Adrenal gland (tissue), 19 donors: ENCODE measurements at regions of chr2 and their contacts with region 1.

Region 1: DNA sequence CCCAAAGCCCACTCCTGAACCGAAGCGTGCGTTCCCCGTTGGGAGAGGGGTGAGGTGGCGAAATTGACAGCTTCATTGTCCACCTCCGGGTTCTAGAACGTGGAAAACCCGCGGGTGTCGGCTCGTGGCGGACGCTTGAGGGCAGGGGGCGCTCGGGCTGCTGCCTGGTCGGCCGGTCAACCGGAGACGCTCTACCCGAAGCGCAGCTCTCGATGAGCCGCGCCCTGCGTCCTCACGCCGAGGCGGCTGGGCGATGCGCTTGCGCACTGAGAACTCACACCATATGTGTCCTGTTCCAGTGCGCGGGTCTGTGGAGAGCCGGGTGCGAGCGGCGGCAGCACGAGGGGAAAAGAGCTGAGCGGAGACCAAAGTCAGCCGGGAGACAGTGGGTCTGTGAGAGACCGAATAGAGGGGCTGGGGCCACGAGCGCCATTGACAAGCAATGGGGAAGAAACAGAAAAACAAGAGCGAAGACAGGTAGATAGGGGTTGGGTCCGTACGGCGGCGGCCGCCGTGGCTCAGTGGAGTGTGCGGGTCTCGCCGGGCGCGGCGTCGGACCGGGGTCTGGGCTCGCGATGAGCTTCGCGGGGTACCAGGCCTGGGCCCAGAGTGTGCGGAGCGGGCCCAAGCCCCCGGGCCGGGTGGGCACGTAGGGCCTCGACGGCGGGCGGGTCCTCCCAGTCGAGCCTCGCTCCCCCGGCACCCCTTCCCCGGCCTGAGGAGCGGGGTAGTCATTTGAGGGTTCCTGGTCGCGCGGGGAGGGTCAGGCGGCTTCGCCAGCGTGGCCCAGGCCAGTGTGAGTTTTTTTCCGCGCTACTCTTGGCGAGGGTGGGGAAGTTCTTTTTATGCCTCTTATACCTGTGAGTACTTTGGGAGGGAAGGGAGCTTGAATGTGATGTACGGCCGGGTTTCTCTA is at the start of gene EIF5B:
- DNase-seq: peak; percentile 95 to 98 (median 96)
- H3K4me3 ChIP-seq: peak within 1 kb of the TSS; percentile 62 to 80 (median 75)
- H3K27ac ChIP-seq: peak within 1 kb of the TSS; percentile 81 to 96 (median 92)
- H3K4me1 ChIP-seq: peaks cover 12 to 26% of the 10 kb centered on the region in 2 donors
- H3K27me3 ChIP-seq: no peaks in the 10 kb centered on the region
- CTCF ChIP-seq: peak; percentile 23 to 51 (median 48)
- POLR2A ChIP-seq: peak; percentile 73 to 96
- total RNA-seq, gene EIF5B: 11.1 to 36.5 (median 23.6) TPM

Region 2: GRCh38 chr2:99180755-99181623 is 156.4 kb before region 1 on chr2 and contains the starts of genes MITD1 and MRPL30:
- intact Hi-C with region 1: loop called in 1 of 2 experiments (anchors 10 kb)
- DNase-seq: peak; percentile 90 to 98 (median 95)
- H3K4me3 ChIP-seq: peak within 1 kb of the TSS; percentile 45 to 80 (median 59)
- H3K27ac ChIP-seq: peak within 1 kb of the TSS; percentile 15 to 90 (median 68)
- H3K4me1 ChIP-seq: peaks cover 22 to 44% of the 10 kb centered on the region in 2 donors
- H3K27me3 ChIP-seq: no peaks in the 10 kb centered on the region
- CTCF ChIP-seq: no peak
- POLR2A ChIP-seq: peak; percentile 65 to 84
- total RNA-seq, gene MITD1: 14.4 to 48.1 (median 24.2) TPM
- total RNA-seq, gene MRPL30: 25.4 to 50.8 (median 32.3) TPM

Region 3: DNA sequence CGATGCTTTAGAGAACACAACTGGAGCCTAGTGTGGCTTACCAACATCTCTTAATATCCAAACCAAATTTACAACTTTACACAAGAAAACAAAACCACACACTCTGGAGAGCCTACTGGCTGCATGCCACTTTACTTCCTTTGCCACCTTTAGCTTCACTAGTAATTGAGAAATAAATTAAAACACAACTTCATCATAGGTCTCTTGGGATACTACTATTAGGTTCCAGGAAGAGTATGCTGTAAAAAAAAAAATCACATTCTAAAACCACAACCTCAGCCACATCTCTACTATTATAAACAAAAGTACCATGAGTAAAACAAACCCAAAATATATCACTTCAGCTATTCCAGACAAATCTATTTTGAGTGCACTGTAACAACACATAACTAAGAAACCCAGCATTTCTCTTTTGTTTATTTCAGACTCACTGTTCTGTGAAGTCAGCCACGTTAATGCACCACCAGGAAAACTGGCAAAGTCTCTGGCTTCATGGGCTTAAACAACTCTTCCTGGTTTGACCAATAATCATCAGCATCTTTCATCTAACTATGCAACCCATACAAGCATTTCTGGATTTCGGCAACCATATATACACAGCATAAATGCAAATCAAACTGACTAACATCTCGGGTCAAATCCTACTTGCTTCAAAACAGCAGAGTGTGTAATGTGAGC is 93.4 kb after region 1 on chr2:
- intact Hi-C with region 1: no loop called
- DNase-seq: no peak
- H3K4me3 ChIP-seq: no peak overlapping the region
- H3K27ac ChIP-seq: no peak overlapping the region
- H3K4me1 ChIP-seq: peaks cover 0 to 4% of the 10 kb centered on the region in 2 donors
- H3K27me3 ChIP-seq: no peaks in the 10 kb centered on the region
- CTCF ChIP-seq: no peak
- POLR2A ChIP-seq: no peak

Region 4: GRCh38 chr2:99489761-99490622 is 152.6 kb after region 1 on chr2 and contains the start of gene REV1:
- intact Hi-C with region 1: loop called in 1 of 2 experiments (anchors 5 kb)
- DNase-seq: peak; percentile 91 to 96 (median 93)
- H3K4me3 ChIP-seq: peak within 1 kb of the TSS; percentile 60 to 99 (median 76)
- H3K27ac ChIP-seq: peak within 1 kb of the TSS; percentile 39 to 100 (median 97)
- H3K4me1 ChIP-seq: peaks cover 14 to 39% of the 10 kb centered on the region in 2 donors
- H3K27me3 ChIP-seq: no peaks in the 10 kb centered on the region
- CTCF ChIP-seq: peak; percentile 66 to 95 (median 94)
- POLR2A ChIP-seq: peak; percentile 1 to 48
- total RNA-seq, gene REV1: 20.9 to 90.8 (median 48.6) TPM